ENCODE measurements at regions of chr2 and their contacts with region 1.

Region 1: DNA sequence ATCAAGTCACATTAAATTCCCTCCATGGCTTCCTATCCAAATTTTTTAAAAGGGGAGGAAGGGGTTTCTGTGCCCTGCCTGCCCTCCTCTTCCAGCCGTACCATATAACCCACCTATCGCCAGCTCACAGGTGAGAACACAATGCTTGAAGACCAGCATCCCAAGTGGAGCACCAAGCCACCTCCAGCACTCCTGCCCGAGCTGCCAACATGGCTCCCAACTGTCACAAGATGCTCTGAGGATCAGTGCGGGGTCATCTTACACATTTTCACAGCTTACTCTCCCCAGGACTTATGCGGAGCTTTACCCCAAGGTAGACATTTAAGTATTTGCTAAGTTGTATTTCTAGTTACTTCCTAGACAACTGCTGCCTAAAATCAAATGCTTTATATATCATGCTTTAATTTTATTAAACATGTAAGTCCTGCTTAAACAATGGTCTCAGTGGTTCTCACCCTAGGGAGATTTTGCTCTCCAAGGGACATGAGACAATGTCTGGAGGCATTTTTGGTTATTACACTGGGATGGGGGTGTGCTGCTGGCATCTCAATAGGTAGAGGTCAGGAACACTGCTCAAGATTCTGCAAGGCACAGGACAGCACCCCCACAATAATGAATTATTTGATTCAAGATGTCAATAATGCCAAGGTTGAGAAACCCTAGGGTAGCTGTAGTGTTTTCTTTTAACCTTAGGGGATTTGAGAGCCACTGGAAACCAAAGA is 45.8 kb downstream of the SF3B1 start:
- DNase-seq: no peak
- H3K4me3 ChIP-seq: no peak overlapping the region
- H3K27ac ChIP-seq: no peak overlapping the region
- H3K4me1 ChIP-seq: no peaks in the 10 kb centered on the region
- H3K27me3 ChIP-seq: no peaks in the 10 kb centered on the region
- CTCF ChIP-seq: no peak
- EP300 ChIP-seq: no peak
- POLR2A ChIP-seq: no peak
- RAD21 ChIP-seq: no peak

Region 2: GRCh38 chr2:197461057-197461456 is 72.0 kb after region 1 on chr2:
- CTCF ChIA-PET with region 1: no interaction called
- POLR2A ChIA-PET with region 1: no interaction called
- DNase-seq: no peak
- H3K4me3 ChIP-seq: no peak overlapping the region
- H3K27ac ChIP-seq: no peak overlapping the region
- H3K4me1 ChIP-seq: no peaks in the 10 kb centered on the region
- H3K27me3 ChIP-seq: no peaks in the 10 kb centered on the region
- CTCF ChIP-seq: no peak
- EP300 ChIP-seq: no peak
- POLR2A ChIP-seq: no peak
- RAD21 ChIP-seq: no peak

Region 3: DNA sequence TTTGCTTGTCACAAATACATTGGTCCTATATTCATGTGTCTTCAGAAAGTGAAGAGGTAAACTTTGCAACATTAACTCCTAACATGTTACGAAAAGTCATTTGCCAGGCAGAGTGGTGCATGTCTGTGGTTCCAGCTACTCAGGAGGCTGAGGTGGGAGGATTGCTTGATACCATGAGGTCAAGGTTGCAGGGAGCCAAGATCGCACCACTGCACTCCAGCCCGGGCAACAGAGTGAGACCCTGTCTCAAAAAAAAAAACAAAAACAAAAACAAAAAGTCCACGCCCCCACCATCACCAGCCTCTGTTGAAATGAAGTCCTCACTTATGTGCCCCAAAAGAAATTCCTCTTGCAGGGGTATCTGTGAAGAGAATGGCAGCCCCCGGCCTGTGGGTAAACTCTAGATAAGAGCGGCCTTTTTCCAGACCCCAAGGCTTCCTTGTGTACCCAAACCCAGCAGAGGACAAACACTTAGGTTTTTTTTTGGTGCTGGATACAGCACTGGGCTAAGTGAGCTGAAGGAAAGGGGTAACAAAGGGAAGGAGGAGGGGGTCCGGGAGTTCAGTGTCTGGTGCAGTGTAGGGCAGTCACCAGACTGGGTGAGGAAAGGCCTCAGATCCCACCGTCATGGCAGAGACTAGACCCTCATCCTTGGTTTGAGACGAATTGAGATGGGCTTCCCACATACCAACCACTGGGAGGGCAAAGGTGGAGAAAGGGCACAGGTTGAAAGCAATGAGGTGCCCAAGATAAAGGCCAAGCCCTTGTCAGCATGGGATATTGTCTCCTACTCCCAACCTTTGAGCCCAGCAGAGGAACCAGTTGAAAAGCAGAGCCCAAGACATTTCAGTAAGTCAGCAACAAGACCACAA is 91.4 kb after region 1 on chr2:
- CTCF ChIA-PET with region 1: no interaction called
- POLR2A ChIA-PET with region 1: interaction called, 11 read pairs
- DNase-seq: no peak
- H3K4me3 ChIP-seq: no peak overlapping the region
- H3K27ac ChIP-seq: no peak overlapping the region
- H3K4me1 ChIP-seq: no peaks in the 10 kb centered on the region
- H3K27me3 ChIP-seq: no peaks in the 10 kb centered on the region
- CTCF ChIP-seq: no peak
- EP300 ChIP-seq: no peak
- POLR2A ChIP-seq: no peak
- RAD21 ChIP-seq: no peak

Region 4: GRCh38 chr2:197707316-197708213 is 318.5 kb after region 1 on chr2:
- CTCF ChIA-PET with region 1: no interaction called
- POLR2A ChIA-PET with region 1: no interaction called
- DNase-seq: no peak
- H3K4me3 ChIP-seq: peak overlapping the region; percentile 85 to 92 (median 90); a peak in 7 of 8 replicates
- H3K27ac ChIP-seq: no peak overlapping the region
- H3K4me1 ChIP-seq: peaks cover 0 to 7% (median 5%) of the 10 kb centered on the region in 4 experiments; a peak in 4 of 7 replicates
- H3K27me3 ChIP-seq: no peaks in the 10 kb centered on the region; a peak in 1 of 7 replicates
- CTCF ChIP-seq: peak in 2 of 3 experiments; percentile 31 to 63; a peak in 2 of 4 replicates
- EP300 ChIP-seq: no peak
- POLR2A ChIP-seq: no peak
- RAD21 ChIP-seq: peak; percentile 64 to 68

Measured in H1 (cell line).